ENCODE measurements at regions of chrX and their contacts with region 1.

Region 1: DNA sequence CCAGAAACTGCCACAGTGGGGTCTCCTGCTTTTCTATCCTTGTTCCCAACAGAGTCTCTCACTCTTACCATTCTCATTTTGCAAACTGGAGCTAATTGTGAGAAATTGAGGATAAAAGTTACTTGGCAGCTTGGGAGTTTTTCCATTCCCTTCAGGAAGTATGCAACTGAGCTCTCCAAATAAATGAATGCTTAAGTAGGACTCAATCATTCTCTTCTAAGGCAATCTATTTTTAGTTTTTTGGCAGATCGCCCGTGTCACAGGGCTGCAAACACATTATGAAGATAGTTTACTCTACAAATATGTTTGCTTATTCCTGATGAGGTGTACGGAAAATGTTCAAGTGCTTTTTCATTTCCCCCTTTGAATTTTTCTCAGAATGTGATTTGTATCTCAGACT is 5.3 kb downstream of the ASB11 start:
- DNase-seq: no peak
- H3K4me3 ChIP-seq: no peak overlapping the region
- H3K27ac ChIP-seq: no peak overlapping the region
- H3K27me3 ChIP-seq: no peaks in the 10 kb centered on the region
- CTCF ChIP-seq: no peak

Region 2: GRCh38 chrX:14963447-14964236 is 346.5 kb before region 1 on chrX:
- CTCF ChIA-PET with region 1: no interaction called
- POLR2A ChIA-PET with region 1: interaction called, 10 read pairs
- DNase-seq: no peak
- H3K4me3 ChIP-seq: no peak overlapping the region
- H3K27ac ChIP-seq: peak overlapping the region; percentile 31
- H3K27me3 ChIP-seq: no peaks in the 10 kb centered on the region
- CTCF ChIP-seq: no peak

Measured in AG04450 (cell line).